Naive thymus-derived CD4-positive, alpha-beta T cell (primary cell): ENCODE measurements at regions of chr22 and their contacts with region 1.

Region 1: GRCh38 chr22:42269407-42270177 is 861 bp downstream of the TCF20 start:
- DNase-seq: peak; percentile 37 to 74 (median 65)
- ATAC-seq: peak; percentile 64
- H3K4me3 ChIP-seq: peak overlapping the region; percentile 86
- H3K4me3 Mint-ChIP-seq: peak overlapping the region; percentile 86 to 98 (median 92)
- H3K27ac ChIP-seq: peak overlapping the region; percentile 97
- H3K27ac Mint-ChIP-seq: peak overlapping the region; percentile 79 to 95 (median 88)
- H3K4me1 ChIP-seq: peaks cover 28% of the 10 kb centered on the region in 2 donors
- H3K4me1 Mint-ChIP-seq: peaks cover 35 to 56% (median 43%) of the 10 kb centered on the region in 7 donors
- H3K27me3 ChIP-seq: no peaks in the 10 kb centered on the region
- H3K27me3 Mint-ChIP-seq: no peaks in the 10 kb centered on the region

Region 2: DNA sequence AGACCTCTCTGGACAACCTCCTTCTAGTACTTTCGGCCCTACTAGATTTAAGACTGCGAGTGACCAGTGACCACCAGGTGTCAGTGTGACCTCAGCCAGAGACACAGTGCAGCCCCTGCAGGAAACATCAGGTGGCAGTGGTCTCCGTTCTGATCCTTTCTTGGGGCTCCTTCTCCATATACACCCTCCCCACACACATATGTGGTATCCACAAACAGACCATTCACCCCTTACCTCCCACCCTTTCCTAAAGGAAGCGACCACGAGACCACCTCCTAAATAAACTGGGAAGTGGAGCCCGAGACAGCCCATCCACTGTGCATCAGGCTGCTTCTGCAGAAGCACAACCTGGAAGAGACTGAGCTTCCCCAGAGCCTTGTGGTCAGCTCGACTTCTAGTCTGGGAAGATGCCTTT is 100.5 kb before region 1 on chr22:
- CTCF ChIA-PET with region 1: no interaction called
- POLR2A ChIA-PET with region 1: no interaction called
- intact Hi-C with region 1: loop called in 1 of 2 experiments (anchors 2 kb)
- DNase-seq: peak; percentile 36 to 77 (median 60)
- ATAC-seq: peak; percentile 89
- H3K4me3 ChIP-seq: no peak overlapping the region
- H3K4me3 Mint-ChIP-seq: no peak overlapping the region
- H3K27ac ChIP-seq: no peak overlapping the region
- H3K27ac Mint-ChIP-seq: peak overlapping the region in 1 of 9 donors; percentile 31
- H3K4me1 ChIP-seq: peaks cover 0 to 15% of the 10 kb centered on the region in 2 donors
- H3K4me1 Mint-ChIP-seq: peaks cover 13 to 39% (median 33%) of the 10 kb centered on the region in 7 donors
- H3K27me3 ChIP-seq: no peaks in the 10 kb centered on the region
- H3K27me3 Mint-ChIP-seq: no peaks in the 10 kb centered on the region

Region 3: GRCh38 chr22:42180349-42180842 is 89.2 kb before region 1 on chr22:
- CTCF ChIA-PET with region 1: interaction called, 3 read pairs
- POLR2A ChIA-PET with region 1: no interaction called
- intact Hi-C with region 1: loop called in 1 of 2 experiments (anchors 5 kb)
- DNase-seq: peak in 7 of 9 donors; percentile 59 to 78 (median 71)
- ATAC-seq: peak; percentile 97
- H3K4me3 ChIP-seq: no peak overlapping the region
- H3K4me3 Mint-ChIP-seq: peak overlapping the region; percentile 19 to 73 (median 57)
- H3K27ac ChIP-seq: peak overlapping the region; percentile 52
- H3K27ac Mint-ChIP-seq: peak overlapping the region; percentile 55 to 90 (median 79)
- H3K4me1 ChIP-seq: peaks cover 25 to 38% of the 10 kb centered on the region in 2 donors
- H3K4me1 Mint-ChIP-seq: peaks cover 50 to 86% (median 75%) of the 10 kb centered on the region in 7 donors
- H3K27me3 ChIP-seq: no peaks in the 10 kb centered on the region
- H3K27me3 Mint-ChIP-seq: no peaks in the 10 kb centered on the region

Region 4: DNA sequence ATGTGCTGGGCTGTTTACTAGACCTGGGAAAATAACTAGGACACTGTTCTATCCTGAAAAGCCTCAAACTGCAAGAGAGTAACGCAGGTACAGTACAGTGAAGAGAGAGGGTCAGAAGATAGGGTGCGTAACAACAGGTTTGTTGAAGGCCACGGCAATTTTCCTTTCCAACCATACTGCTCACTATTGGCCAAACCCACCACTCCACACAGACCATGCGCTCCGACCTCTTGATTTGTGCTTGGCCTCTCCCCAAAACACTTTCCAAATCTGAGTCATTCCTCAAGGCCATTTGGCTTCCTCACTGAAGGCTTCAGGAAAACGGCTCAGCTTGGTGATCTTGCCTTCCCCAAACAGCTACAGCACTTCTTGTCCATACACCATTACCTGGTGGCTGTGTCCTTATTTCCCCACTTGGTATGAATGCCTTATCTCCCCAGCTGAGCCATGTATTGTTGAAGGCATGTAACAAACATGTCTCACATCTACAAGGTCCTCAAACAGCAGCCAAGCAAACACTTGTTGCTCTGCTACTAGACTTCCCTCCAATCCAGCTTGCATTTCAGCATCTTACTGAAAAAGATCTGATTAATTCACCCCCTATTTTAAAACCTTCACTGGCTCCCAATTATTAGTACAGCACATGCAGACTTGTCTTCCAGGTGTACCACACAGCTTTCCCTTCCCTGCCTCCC is 40.0 kb before region 1 on chr22:
- CTCF ChIA-PET with region 1: no interaction called
- POLR2A ChIA-PET with region 1: no interaction called
- intact Hi-C with region 1: loop called in 1 of 2 experiments (anchors 5 kb)
- DNase-seq: no peak
- ATAC-seq: no peak
- H3K4me3 ChIP-seq: no peak overlapping the region
- H3K4me3 Mint-ChIP-seq: peak overlapping the region in 5 of 10 donors; percentile 2 to 50 (median 21)
- H3K27ac ChIP-seq: no peak overlapping the region
- H3K27ac Mint-ChIP-seq: peak overlapping the region in 5 of 9 donors; percentile 6 to 56 (median 15)
- H3K4me1 ChIP-seq: peaks cover 0 to 12% of the 10 kb centered on the region in 2 donors
- H3K4me1 Mint-ChIP-seq: peaks cover 30 to 80% (median 64%) of the 10 kb centered on the region in 7 donors
- H3K27me3 ChIP-seq: no peaks in the 10 kb centered on the region
- H3K27me3 Mint-ChIP-seq: no peaks in the 10 kb centered on the region

Region 5: GRCh38 chr22:42296381-42296853 is 26.8 kb after region 1 on chr22:
- CTCF ChIA-PET with region 1: no interaction called
- POLR2A ChIA-PET with region 1: interaction called, 3 read pairs
- intact Hi-C with region 1: loop called in 1 of 2 experiments (anchors 1 kb)
- DNase-seq: peak in 4 of 9 donors; percentile 37 to 51 (median 44)
- ATAC-seq: no peak
- H3K4me3 ChIP-seq: no peak overlapping the region
- H3K4me3 Mint-ChIP-seq: peak overlapping the region in 5 of 10 donors; percentile 2 to 63 (median 29)
- H3K27ac ChIP-seq: peak overlapping the region; percentile 39
- H3K27ac Mint-ChIP-seq: peak overlapping the region in 8 of 9 donors; percentile 36 to 95 (median 90)
- H3K4me1 ChIP-seq: peaks cover 23 to 69% of the 10 kb centered on the region in 2 donors
- H3K4me1 Mint-ChIP-seq: peaks cover 50 to 94% (median 79%) of the 10 kb centered on the region in 7 donors
- H3K27me3 ChIP-seq: no peaks in the 10 kb centered on the region
- H3K27me3 Mint-ChIP-seq: no peaks in the 10 kb centered on the region

Region 6: DNA sequence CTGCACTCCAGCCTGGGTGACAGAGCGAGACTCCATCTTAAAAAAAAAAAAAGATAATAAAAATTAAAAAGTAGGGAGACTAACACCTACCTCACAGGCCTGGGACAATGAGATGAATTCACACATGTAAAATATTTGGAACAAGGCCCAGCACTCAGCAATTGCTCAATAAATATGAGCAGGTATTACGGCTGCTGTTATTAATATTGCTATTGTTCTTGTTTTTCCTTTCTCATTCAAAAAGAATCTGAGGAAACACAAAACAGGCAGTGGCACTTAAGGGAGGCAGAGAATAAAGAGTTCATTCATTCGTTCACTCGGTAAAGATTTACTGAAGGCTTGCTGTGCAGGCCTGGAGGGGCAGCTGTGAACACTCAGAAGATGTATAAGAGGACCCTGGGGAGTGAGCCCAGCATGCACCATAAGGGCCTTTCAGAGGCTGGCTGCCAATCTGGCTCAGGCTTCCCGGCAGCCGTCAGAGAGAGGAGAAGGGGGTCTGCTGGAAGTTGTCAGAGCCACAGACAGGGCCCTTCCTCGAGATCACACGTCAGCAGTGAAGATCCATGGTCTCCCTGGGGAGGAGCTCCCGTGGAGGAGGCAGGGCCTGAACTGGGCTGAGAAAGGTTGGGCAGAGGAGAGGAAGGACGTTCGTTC is 52.4 kb after region 1 on chr22:
- CTCF ChIA-PET with region 1: no interaction called
- POLR2A ChIA-PET with region 1: no interaction called
- intact Hi-C with region 1: no loop called
- DNase-seq: no peak
- ATAC-seq: no peak
- H3K4me3 ChIP-seq: no peak overlapping the region
- H3K4me3 Mint-ChIP-seq: no peak overlapping the region
- H3K27ac ChIP-seq: no peak overlapping the region
- H3K27ac Mint-ChIP-seq: peak overlapping the region in 5 of 9 donors; percentile 6 to 88 (median 64)
- H3K4me1 ChIP-seq: peaks cover 19% of the 10 kb centered on the region in 2 donors
- H3K4me1 Mint-ChIP-seq: peaks cover 16 to 41% (median 28%) of the 10 kb centered on the region in 7 donors
- H3K27me3 ChIP-seq: no peaks in the 10 kb centered on the region
- H3K27me3 Mint-ChIP-seq: peaks cover 0 to 3% (median 0%) of the 10 kb centered on the region in 5 donors

Region 7: GRCh38 chr22:42369245-42370041 is 99.9 kb after region 1 on chr22:
- CTCF ChIA-PET with region 1: no interaction called
- POLR2A ChIA-PET with region 1: interaction called, 4 read pairs
- intact Hi-C with region 1: loop called in 1 of 2 experiments (anchors 1 kb)
- DNase-seq: peak; percentile 67 to 84 (median 79)
- ATAC-seq: peak; percentile 99
- H3K4me3 ChIP-seq: peak overlapping the region; percentile 66
- H3K4me3 Mint-ChIP-seq: peak overlapping the region; percentile 87 to 99 (median 93)
- H3K27ac ChIP-seq: peak overlapping the region; percentile 30
- H3K27ac Mint-ChIP-seq: peak overlapping the region; percentile 2 to 88 (median 77)
- H3K4me1 ChIP-seq: peaks cover 4 to 11% of the 10 kb centered on the region in 2 donors
- H3K4me1 Mint-ChIP-seq: peaks cover 9 to 19% (median 14%) of the 10 kb centered on the region in 7 donors
- H3K27me3 ChIP-seq: peaks cover 0 to 18% of the 10 kb centered on the region in 2 donors
- H3K27me3 Mint-ChIP-seq: peaks cover 19 to 49% (median 25%) of the 10 kb centered on the region in 5 donors